Left ventricle myocardium superior (tissue), 1 donor: ENCODE measurements at regions of chr1 and their contacts with region 1.

Region 1: DNA sequence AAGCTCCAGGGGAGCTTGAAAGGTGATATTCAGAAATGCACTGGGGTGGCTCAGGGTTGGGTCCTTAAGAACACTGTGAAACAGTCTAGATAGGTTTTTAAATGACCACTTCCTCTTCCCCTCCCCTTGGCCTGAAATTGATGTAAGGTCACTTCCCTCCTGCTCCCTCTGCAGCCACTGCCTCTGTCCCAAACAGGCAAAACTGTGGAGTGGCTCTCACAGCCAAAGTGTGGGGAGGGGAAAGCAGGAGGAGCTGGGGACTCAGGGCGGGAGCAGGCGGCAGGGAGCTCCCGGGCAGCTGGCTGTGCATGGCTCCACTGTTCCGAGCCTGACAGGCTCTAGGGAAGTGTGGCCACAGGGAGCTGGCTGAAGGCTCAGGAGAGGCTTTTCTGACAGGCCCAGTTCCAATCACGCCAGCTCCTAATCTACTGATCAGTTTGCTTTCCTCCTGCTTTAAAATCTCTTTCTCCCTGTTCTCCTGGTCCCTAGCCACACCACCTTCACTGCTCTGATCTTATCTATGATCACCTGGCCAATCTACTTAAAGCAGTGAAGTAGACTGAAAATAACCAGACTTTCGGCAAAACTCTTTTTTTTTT is 5.1 kb upstream of the CSRP1 start:
- DNase-seq: peak; percentile 79
- ATAC-seq: peak; percentile 81

Region 2: DNA sequence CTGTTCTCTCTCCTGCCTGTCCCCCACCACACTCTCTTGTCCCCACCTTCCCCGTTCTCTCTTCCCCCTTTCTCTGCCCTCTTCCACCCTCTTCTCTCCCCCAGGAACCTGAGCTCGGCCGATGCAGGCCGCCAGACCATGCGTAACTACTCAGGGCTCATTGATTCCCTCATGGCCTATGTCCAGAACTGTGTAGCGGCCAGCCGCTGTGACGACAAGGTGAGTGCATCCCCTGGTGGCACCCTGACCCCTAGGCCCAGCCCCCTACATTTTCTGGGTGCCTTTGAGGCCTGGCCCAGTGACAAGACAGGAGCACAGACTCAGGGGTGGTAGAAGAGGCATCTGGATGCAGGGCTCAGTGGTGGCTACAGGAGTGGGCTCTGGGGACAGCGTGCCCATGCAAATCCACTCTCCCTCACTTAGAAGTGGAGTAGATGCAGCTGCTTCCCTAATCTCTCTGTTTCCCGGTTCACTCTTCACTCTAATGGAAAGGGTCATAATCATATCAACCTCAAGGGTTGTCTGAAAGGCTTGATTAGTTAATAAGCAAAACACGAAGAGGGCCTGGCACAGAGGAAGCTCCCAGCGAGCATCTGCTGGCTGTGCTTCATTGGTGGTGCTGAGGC is 191.8 kb before region 1 on chr1:
- intact Hi-C with region 1: no loop called
- DNase-seq: no peak
- ATAC-seq: no peak

Region 3: DNA sequence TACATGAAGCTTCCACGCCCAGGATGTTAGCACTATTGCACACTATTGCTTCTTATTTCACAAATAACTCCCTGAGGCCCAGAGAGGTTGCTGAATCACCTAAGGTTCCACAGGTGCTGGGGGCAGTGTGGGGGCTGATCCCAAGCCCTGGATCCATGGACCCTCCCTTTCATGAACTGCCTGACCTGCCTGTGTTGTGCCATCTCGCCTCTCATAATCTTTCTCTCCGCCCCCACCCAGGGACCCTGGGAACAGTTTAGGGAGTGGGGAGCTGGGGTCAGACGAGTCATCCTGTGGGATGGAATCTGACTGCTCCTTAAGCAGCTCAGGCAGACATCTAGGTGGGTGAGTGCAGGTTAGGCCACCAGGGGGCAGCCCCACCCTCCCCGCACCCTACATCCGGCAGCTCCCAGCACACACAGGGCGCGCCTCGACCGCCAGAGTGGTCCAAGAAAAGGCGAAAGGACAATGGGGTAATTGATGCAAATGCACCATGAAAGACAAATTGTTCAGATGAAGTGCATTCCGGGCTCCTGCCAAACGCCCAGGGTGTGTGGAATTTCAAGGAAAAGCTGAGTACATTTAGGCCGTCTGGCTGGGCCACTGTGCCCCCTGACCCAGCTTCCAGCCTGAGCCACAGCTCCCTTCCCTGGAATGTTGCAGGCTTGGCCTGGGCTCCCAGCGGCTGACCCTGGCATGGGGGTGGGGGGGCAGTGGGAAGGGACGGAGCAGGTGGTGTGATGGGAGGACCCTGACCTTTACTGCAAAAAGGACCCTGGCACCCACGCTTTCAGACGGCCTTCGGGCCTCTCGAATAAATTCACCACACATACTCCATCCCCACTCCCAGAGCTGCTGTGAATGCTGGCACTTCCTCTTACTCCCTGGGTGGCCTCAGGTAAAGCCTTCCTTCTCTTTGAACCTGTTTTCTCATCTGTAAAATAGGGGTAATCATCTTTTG is 63.8 kb before region 1 on chr1:
- intact Hi-C with region 1: loop called (anchors 10 kb)
- DNase-seq: peak; percentile 87
- ATAC-seq: peak; percentile 85

Region 4: GRCh38 chr1:201481761-201482493 is 30.1 kb before region 1 on chr1:
- intact Hi-C with region 1: loop called (anchors 2 kb)
- DNase-seq: peak; percentile 91
- ATAC-seq: peak; percentile 85

Region 5: GRCh38 chr1:201582705-201583442 is 70.8 kb after region 1 on chr1:
- intact Hi-C with region 1: no loop called
- DNase-seq: no peak
- ATAC-seq: peak; percentile 26

Region 6: DNA sequence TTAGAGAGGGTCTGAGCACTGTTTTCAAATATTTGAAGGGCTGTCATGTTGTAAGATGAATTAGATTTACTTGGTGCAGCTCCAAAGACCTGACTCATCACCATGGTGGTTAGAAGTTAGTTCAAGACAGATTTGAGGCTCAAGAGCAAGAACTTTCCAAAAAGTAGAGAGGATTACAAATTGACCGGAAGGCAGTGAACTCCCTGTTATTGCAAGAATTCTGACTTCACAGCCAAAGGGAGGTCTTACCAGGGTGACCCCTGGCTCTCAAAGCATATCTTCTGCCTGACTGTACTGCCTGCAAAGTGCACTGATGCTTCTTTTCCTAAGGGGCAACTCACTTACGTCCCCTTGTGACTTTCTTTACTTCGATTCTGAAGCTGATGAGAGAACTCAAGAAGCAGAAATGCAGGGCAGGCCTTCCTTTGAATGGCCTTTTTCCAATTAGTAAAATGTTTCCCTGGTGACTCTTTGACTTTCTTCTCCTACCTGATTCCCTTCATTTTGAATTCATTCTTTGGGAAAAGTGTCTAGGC is 113.3 kb after region 1 on chr1:
- intact Hi-C with region 1: no loop called
- DNase-seq: no peak
- ATAC-seq: no peak